ENCODE measurements at regions of chr10 and their contacts with region 1.

Region 1: DNA sequence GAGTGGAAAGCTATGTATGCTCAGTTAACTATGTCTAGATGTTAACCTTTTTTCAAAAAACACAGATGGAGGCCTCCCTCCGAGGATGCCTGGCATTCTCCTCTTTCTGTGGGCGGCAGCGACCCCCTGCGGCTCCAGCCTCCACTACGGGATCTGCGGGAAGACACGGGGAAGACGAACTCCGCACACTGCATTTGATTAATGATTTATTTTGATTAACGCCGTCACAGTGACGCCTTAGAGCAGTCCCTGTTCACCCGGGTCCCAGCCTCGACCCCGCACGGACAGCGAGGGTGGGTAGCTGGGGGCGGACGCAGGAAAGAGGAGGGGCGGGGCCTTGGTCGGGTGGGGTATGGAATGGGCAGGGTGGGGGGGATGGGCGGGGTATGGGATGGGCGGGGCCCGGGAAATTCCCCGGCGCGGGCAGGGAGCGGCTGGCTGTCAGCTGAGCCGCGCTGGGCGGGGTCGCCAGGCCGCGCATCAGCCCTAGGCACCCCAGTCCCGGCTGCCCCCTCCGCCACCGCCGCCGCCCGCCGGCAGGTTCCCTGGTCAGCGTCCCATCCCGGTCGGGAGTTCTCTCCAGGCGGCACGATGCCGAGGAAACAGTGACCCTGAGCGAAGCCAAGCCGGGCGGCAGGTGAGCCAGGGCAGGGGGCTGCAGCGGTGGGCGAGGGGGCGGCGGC is at the start of gene OPTN:
- DNase-seq: peak; percentile 89
- H3K4me3 Mint-ChIP-seq: peak within 1 kb of the TSS; percentile 88
- H3K27ac Mint-ChIP-seq: peak within 1 kb of the TSS; percentile 81
- H3K4me1 Mint-ChIP-seq: peaks cover 26% of the 10 kb centered on the region
- H3K27me3 Mint-ChIP-seq: no peaks in the 10 kb centered on the region
- total RNA-seq, gene OPTN: 39.7 to 43.8 TPM

Region 2: DNA sequence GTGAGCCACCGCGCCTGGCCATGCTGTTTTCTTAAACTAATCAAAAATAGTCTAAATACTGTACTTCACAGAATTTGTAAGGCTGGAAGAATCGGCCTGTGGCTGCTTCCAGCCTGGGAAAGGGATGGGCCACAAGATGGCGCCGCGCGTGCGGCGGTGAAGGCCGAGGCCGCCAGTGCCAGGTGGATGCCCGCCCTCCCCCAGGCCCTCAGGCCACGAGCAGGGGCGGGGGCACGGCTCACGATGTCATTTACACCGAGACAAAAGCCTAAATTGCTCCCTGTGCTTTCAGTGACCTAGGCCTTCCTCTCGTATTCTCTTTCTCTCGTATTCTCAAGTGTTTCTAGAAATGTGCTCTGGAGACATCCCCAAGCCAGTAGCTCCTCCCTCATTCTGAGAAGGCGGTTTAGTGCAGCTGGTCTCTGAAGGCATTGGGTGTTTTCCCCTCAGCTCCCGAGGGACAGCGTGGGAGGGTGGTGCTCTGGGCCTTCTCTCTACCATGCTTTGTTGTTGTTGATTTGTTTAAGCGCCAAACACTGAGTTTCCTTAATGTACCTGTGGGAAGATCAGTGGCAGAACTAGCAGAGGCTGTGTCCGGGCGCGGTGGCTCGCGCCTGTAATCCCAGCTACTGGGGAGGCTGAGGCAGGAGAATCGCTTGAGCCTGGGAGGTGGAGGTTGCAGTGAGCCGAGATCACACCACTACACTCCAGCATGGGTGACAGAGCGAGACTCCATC is 835.4 kb before region 1 on chr10:
- CTCF ChIA-PET with region 1: no interaction called
- intact Hi-C with region 1: loop called (anchors 1 kb)
- DNase-seq: peak; percentile 84
- H3K4me3 Mint-ChIP-seq: peak overlapping the region; percentile 58
- H3K27ac Mint-ChIP-seq: peak overlapping the region; percentile 79
- H3K4me1 Mint-ChIP-seq: peaks cover 17% of the 10 kb centered on the region
- H3K27me3 Mint-ChIP-seq: no peaks in the 10 kb centered on the region

Region 3: GRCh38 chr10:12663863-12664262 is 435.9 kb before region 1 on chr10:
- CTCF ChIA-PET with region 1: no interaction called
- intact Hi-C with region 1: no loop called
- DNase-seq: no peak
- H3K4me3 Mint-ChIP-seq: no peak overlapping the region
- H3K27ac Mint-ChIP-seq: no peak overlapping the region
- H3K4me1 Mint-ChIP-seq: peaks cover 2% of the 10 kb centered on the region
- H3K27me3 Mint-ChIP-seq: no peaks in the 10 kb centered on the region

Region 4: GRCh38 chr10:12902135-12902572 is 197.7 kb before region 1 on chr10:
- CTCF ChIA-PET with region 1: interaction called, 3 read pairs
- intact Hi-C with region 1: loop called (anchors 1 kb)
- DNase-seq: peak; percentile 71
- H3K4me3 Mint-ChIP-seq: no peak overlapping the region
- H3K27ac Mint-ChIP-seq: no peak overlapping the region
- H3K4me1 Mint-ChIP-seq: no peaks in the 10 kb centered on the region
- H3K27me3 Mint-ChIP-seq: peaks cover 5% of the 10 kb centered on the region

Region 5: DNA sequence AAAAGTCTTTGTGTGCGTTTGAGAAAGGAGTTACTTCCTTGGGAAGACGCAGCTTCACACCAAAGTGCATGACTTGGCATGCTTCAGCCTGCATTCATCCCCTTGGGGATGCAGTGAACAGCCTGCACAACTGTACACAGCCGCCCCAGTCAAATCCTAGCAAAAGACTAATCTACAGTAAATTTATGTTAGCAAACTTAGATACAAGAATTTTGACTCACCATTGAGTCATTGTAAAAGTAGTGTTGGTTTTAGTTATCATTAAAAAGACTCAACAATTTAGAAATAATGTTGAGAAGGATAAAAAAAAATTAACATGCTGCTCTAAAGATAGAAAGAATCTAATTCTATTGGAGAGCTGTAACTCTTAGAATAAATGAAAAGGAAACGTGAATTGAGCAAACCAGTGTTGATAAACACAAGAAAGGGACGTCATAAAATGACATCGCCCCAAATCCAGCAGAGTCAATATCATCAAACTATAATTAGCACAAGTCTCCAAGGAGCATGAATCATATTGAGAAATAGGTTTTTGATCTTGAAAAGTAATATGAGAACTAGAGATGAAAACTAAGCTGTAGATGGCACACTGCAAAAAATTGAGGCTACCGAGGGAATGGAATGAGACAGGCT is 11.7 kb before region 1 on chr10:
- CTCF ChIA-PET with region 1: no interaction called
- intact Hi-C with region 1: loop called (anchors 1 kb)
- DNase-seq: no peak
- H3K4me3 Mint-ChIP-seq: no peak overlapping the region
- H3K27ac Mint-ChIP-seq: no peak overlapping the region
- H3K4me1 Mint-ChIP-seq: peaks cover 4% of the 10 kb centered on the region
- H3K27me3 Mint-ChIP-seq: peaks cover 4% of the 10 kb centered on the region

Region 6: GRCh38 chr10:13299437-13300287 is 199.9 kb after region 1 on chr10 and contains the start of gene PHYH:
- CTCF ChIA-PET with region 1: interaction called, 5 read pairs
- intact Hi-C with region 1: loop called (anchors 1 kb)
- DNase-seq: peak; percentile 78
- H3K4me3 Mint-ChIP-seq: peak within 1 kb of the TSS; percentile 76
- H3K27ac Mint-ChIP-seq: peak within 1 kb of the TSS; percentile 83
- H3K4me1 Mint-ChIP-seq: peaks cover 24% of the 10 kb centered on the region
- H3K27me3 Mint-ChIP-seq: no peaks in the 10 kb centered on the region
- total RNA-seq, gene PHYH: 13.3 to 14.2 TPM